CD14-positive monocyte (primary cell): ENCODE measurements at regions of chr1 and their contacts with region 1.

Region 1: GRCh38 chr1:165884690-165885304 is 57.4 kb downstream of the UCK2 start:
- DNase-seq: peak; percentile 71 to 92 (median 76)
- H3K4me3 ChIP-seq: no peak overlapping the region
- H3K4me3 Mint-ChIP-seq: peak overlapping the region in 1 of 2 donors; percentile 53
- H3K27ac ChIP-seq: peak overlapping the region; percentile 69 to 83
- H3K27ac Mint-ChIP-seq: peak overlapping the region; percentile 81 to 92 (median 88)
- H3K4me1 ChIP-seq: peaks cover 23 to 25% of the 10 kb centered on the region in 2 donors
- H3K4me1 Mint-ChIP-seq: peaks cover 41% of the 10 kb centered on the region
- H3K27me3 ChIP-seq: no peaks in the 10 kb centered on the region
- H3K27me3 Mint-ChIP-seq: no peaks in the 10 kb centered on the region
- CTCF ChIP-seq: no peak

Region 2: GRCh38 chr1:165842671-165843129 is 42.1 kb before region 1 on chr1:
- intact Hi-C with region 1: loop called in 1 of 2 experiments (anchors 5 kb)
- DNase-seq: peak; percentile 41 to 66 (median 55)
- H3K4me3 ChIP-seq: no peak overlapping the region
- H3K4me3 Mint-ChIP-seq: no peak overlapping the region
- H3K27ac ChIP-seq: peak overlapping the region in 1 of 2 donors; percentile 55
- H3K27ac Mint-ChIP-seq: peak overlapping the region; percentile 20 to 77 (median 53)
- H3K4me1 ChIP-seq: peaks cover 25 to 41% of the 10 kb centered on the region in 2 donors
- H3K4me1 Mint-ChIP-seq: peaks cover 52% of the 10 kb centered on the region
- H3K27me3 ChIP-seq: no peaks in the 10 kb centered on the region
- H3K27me3 Mint-ChIP-seq: peaks cover 0 to 2% (median 0%) of the 10 kb centered on the region in 3 donors
- CTCF ChIP-seq: no peak